ENCODE measurements at regions of chr20 and their contacts with region 1.

Region 1: GRCh38 chr20:40945754-40946450 is 82.7 kb upstream of the TOP1 start:
- DNase-seq: peak; percentile 77
- H3K4me3 ChIP-seq: no peak overlapping the region
- H3K27ac ChIP-seq: no peak overlapping the region
- H3K4me1 ChIP-seq: no peaks in the 10 kb centered on the region
- H3K27me3 ChIP-seq: no peaks in the 10 kb centered on the region
- CTCF ChIP-seq: peak; percentile 77

Region 2: DNA sequence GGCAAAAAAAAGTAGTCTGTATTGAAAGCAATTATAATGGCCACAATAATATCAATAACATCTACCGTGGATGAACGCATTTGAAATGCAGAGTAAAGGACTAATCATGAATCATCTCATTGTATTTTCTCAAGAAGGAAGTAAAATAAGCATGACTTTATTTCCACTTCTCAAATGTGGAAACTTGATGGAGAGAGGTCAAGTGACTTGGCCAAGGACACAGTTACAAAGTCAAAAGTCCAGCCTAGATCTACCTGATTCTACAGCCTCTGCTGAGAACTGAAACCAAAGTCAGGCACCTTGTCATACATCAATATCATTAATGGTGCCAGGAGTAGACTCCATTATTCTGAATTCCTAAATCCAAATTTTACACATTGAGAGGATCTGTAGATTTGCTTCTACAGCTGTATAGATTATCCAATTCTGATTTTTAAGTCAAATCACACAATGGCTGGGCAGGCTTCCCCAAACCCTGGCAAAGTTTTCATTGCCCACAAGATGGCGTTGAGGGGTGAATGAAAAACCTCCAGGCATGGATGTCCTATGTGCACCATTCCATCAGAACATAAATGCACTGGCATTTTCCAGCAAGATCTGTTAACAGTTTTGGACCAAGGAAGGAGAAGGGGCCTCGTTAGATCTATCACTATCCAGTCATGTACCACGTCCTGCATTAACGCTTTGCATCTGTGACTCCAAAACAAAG is 679.9 kb before region 1 on chr20:
- CTCF ChIA-PET with region 1: no interaction called
- POLR2A ChIA-PET with region 1: no interaction called
- intact Hi-C with region 1: loop called (anchors 10 kb)
- DNase-seq: peak; percentile 76
- H3K4me3 ChIP-seq: no peak overlapping the region
- H3K27ac ChIP-seq: no peak overlapping the region
- H3K4me1 ChIP-seq: no peaks in the 10 kb centered on the region
- H3K27me3 ChIP-seq: no peaks in the 10 kb centered on the region
- CTCF ChIP-seq: peak; percentile 79

Region 3: DNA sequence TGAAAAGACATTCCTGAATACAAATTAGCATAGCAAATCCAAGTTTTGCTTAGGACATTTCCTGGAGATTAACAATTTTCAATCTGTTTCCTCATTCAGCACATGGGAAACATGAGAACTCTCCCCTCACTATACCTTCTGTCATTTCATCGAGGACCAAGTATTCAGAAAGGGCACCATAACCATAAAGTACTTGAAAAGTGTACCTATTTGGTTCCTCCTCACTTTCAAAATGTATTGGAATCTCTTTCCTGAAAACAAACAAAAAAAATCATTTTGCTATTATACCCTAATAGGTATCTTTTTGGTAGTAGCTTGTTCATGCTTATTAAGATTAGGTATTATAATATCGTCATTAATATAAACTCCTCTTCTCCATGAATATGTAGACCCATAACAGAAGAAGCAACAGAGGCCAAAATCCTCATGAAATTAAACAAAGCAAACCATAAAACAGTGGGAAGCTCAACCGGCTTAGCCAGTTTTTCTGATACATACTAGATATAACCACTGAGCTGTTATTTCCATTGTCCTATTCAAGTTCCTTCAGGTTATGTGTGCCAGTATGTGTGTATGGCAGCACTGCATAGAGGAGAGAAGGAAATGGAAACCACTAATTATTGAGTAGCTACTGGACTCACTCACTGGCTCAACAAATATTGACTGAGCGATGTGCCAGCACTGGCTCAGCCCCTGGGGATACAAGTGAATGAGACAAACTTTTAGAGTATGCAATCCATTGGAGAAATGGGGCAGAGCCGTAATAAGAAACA is 530.9 kb before region 1 on chr20:
- CTCF ChIA-PET with region 1: no interaction called
- POLR2A ChIA-PET with region 1: interaction called, 10 read pairs
- intact Hi-C with region 1: no loop called
- DNase-seq: no peak
- H3K4me3 ChIP-seq: no peak overlapping the region
- H3K27ac ChIP-seq: no peak overlapping the region
- H3K4me1 ChIP-seq: no peaks in the 10 kb centered on the region
- H3K27me3 ChIP-seq: no peaks in the 10 kb centered on the region
- CTCF ChIP-seq: no peak

Region 4: GRCh38 chr20:40741507-40742106 is 204.3 kb before region 1 on chr20:
- CTCF ChIA-PET with region 1: interaction called, 6 read pairs
- POLR2A ChIA-PET with region 1: no interaction called
- intact Hi-C with region 1: loop called (anchors 5 kb)
- DNase-seq: peak; percentile 62
- H3K4me3 ChIP-seq: no peak overlapping the region
- H3K27ac ChIP-seq: no peak overlapping the region
- H3K4me1 ChIP-seq: no peaks in the 10 kb centered on the region
- H3K27me3 ChIP-seq: peaks cover 33% of the 10 kb centered on the region
- CTCF ChIP-seq: peak; percentile 82

Region 5: DNA sequence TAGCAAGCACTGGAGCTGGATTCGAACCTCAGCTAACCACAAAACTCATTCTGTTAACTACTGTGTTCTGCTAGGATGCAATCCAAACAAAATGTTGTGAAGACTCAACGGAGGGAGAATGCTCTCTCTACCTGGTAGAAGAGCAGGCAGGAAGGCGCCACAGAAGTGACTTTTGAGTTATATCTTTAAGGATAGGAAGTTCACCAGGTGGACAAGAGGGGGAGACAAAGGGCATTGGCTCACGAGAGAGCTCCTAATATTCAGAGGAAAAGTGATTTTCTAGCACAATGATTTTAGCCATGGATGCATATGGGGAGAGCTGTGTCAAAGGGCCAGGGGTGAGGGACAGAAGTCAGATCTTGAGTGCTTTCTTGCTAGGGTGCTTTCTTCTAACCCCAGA is 148.5 kb before region 1 on chr20:
- CTCF ChIA-PET with region 1: interaction called, 14 read pairs
- POLR2A ChIA-PET with region 1: no interaction called
- intact Hi-C with region 1: loop called (anchors 5 kb)
- DNase-seq: peak; percentile 19
- H3K4me3 ChIP-seq: no peak overlapping the region
- H3K27ac ChIP-seq: no peak overlapping the region
- H3K4me1 ChIP-seq: no peaks in the 10 kb centered on the region
- H3K27me3 ChIP-seq: peaks cover 71% of the 10 kb centered on the region
- CTCF ChIP-seq: peak; percentile 62

Measured in A673 (cell line).